Left ventricle myocardium superior (tissue), 1 donor: ENCODE measurements at regions of chr1 and their contacts with region 1.

Region 1: DNA sequence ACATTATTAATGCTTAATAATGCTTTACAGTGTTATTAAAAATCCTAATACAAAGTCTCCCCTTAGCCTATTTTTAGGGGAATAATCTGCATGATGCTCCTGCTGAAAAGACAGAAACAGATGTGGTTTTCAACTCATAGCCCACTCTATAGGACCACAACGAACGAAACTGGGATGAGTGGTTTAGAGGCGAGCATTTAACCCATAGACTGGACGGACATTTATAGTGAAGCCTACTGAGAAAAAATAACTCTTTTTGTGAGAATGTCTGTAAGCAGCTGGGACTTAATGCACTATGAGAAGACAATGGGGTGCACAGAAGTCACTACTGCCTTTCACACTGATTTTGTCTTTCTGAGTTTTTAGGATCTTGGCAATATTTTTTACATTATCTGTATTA is 1599.6 kb upstream of the B3GALT2 start:
- DNase-seq: no peak
- ATAC-seq: no peak

Region 2: DNA sequence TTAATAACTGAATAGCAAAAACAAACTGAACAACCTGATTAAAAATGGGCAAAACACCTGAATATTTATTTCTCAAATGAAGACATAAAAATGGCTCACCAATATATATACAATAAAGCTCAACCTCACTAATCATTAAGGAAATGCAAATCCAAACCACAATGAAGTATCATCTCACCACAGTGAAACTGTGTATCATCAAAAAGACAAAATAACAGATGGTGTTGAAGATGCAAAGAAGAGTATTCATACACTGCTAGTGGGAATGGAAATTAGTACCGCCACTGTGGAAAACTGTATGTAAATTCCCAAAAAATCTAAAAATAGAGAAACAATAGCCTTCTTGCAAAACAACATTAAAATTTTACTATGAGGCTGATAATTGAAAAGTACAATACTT is 60.5 kb after region 1 on chr1:
- intact Hi-C with region 1: loop called (anchors 10 kb)
- DNase-seq: no peak
- ATAC-seq: no peak